ENCODE measurements at regions of chr1 and their contacts with region 1.

Region 1: DNA sequence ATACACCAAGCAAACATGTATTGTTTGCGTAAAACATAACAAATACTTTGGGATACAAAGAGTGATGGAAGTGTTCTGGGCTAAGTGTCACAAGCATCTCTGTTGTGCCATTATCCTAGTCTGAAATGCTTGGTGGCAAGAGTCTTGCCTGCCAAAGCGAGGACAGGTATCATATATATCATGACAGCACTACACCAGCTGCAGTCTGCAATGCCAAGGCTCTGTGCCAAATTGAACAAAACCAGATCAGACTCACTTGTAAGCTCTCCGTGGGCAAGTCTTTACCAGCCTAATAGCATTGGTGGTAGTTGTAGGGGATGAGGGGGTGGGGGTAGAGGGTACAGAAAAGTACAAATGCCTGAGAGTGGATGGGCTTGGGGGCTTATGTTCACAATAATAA is 119.2 kb downstream of the RWDD3 start:
- DNase-seq: no peak

Region 2: DNA sequence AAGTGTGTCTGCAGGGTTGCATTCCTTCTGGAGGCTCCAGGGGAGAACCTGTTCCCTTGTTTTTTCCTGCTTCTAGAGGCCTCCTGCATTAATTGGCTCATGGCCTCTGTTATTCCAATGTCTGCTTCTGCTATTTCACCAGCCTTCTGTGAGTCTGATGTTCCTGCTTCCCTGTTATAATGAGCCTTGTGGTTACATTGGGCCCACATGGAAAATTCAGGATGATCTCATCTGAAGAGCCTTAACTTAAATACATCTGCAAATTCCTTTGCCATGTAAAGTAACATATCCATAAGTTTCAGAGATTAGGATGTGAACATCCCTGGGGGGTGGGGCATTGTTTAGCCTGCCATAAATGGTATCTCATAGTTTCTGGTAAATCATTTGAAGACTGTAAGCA is 62.0 kb after region 1 on chr1:
- intact Hi-C with region 1: loop called in 1 of 2 experiments (anchors 2 kb)
- DNase-seq: no peak

Measured in posterior vena cava (tissue), 2 donors.